HepG2 (cell line): ENCODE measurements at regions of chr4 and their contacts with region 1.

Region 1: DNA sequence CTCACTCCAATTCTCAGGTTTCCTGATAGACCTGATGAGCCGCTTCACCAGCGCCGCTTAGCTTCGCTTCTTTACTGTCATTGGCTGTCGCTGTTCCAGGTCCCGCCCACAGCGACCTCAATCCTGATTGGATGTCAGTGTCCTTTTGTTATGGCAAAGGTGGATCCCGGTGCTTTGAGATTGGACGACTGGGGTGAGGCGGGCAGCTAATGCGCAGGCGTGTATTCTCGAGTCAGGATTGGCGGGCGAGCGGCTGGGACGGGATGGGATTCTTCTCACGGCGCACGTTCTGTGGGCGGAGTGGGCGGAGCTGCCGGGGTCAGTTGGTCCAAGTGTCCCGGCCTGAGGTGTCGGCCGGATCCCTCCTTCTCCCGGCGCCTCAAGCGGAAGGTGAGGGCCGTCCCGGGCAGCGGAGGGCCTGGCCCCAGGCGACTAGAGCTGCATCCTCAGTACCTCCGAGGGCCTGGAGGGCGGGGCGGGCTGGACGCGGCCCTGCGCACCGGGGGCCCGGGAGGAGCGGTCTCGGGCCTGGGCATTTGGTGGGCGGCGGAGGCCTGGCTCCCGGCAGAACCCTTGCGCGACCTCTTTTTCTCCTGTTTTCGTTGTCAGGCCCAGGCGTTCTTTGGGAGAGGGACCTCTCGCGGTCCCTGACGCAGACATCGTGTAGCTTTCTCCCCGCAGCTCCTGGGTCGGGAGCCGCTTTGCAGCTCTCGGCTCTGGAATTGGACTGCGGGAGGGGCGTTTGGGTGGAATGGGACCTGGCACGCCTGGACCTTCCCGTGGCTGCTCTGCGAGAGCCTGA is at the start of gene SCOC:
- DNase-seq: peak; percentile 99
- ATAC-seq: peak; percentile 96
- H3K4me3 ChIP-seq: peak within 1 kb of the TSS; percentile 78 to 86 (median 85)
- H3K27ac ChIP-seq: peak within 1 kb of the TSS; percentile 85
- H3K4me1 ChIP-seq: peaks cover 45% of the 10 kb centered on the region
- H3K27me3 ChIP-seq: no peaks in the 10 kb centered on the region
- CTCF ChIP-seq: no peak
- EP300 ChIP-seq: no peak
- POLR2A ChIP-seq: peak in 1 of 2 experiments; percentile 82; a peak in 3 of 4 replicates
- RAD21 ChIP-seq: no peak
- total RNA-seq, gene SCOC: 65.2 and 109 TPM in 2 replicates

Region 2: GRCh38 chr4:139740531-139741041 is 632.9 kb before region 1 on chr4:
- CTCF ChIA-PET with region 1: no interaction called
- POLR2A ChIA-PET with region 1: no interaction called
- in situ Hi-C with region 1: no loop called
- intact Hi-C with region 1: no loop called
- DNase-seq: peak; percentile 83
- ATAC-seq: peak; percentile 48
- H3K4me3 ChIP-seq: no peak overlapping the region
- H3K27ac ChIP-seq: peak overlapping the region; percentile 73
- H3K4me1 ChIP-seq: peaks cover 42% of the 10 kb centered on the region
- H3K27me3 ChIP-seq: no peaks in the 10 kb centered on the region
- CTCF ChIP-seq: peak; percentile 60
- EP300 ChIP-seq: no peak; a peak in 1 of 4 replicates
- POLR2A ChIP-seq: no peak
- RAD21 ChIP-seq: no peak

Region 3: GRCh38 chr4:140353786-140354185 is 19.7 kb before region 1 on chr4:
- CTCF ChIA-PET with region 1: no interaction called
- POLR2A ChIA-PET with region 1: no interaction called
- in situ Hi-C with region 1: no loop called
- intact Hi-C with region 1: no loop called
- DNase-seq: no peak
- ATAC-seq: no peak
- H3K4me3 ChIP-seq: no peak overlapping the region
- H3K27ac ChIP-seq: no peak overlapping the region
- H3K4me1 ChIP-seq: peaks cover 8% of the 10 kb centered on the region
- H3K27me3 ChIP-seq: peaks cover 0 to 6% of the 10 kb centered on the region in 2 experiments; a peak in 2 of 5 replicates
- CTCF ChIP-seq: no peak
- EP300 ChIP-seq: no peak
- POLR2A ChIP-seq: no peak
- RAD21 ChIP-seq: no peak

Region 4: DNA sequence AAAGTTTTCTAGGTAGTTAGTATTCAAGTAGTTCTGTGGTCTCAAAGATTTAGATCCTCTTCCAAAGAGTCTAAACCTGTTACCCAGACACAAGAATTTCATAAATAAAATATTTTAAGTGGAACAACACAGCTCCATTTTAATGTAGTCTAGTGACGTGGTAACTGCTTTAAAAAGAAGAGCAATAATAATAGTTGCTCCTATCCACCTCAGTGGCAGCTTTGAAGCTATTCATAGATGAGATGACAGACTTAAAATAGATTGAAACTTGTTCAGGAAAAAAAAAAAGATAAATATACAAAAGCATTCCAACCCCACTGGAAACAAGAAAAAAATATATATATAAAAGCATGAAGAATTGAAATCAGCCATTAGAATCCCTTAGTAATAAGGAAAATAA is 14.5 kb after region 1 on chr4:
- CTCF ChIA-PET with region 1: no interaction called
- POLR2A ChIA-PET with region 1: interaction called, 17 read pairs
- in situ Hi-C with region 1: no loop called
- intact Hi-C with region 1: loop called (anchors 2 kb)
- DNase-seq: no peak
- ATAC-seq: no peak
- H3K4me3 ChIP-seq: no peak overlapping the region
- H3K27ac ChIP-seq: no peak overlapping the region
- H3K4me1 ChIP-seq: peaks cover 14% of the 10 kb centered on the region
- H3K27me3 ChIP-seq: no peaks in the 10 kb centered on the region
- CTCF ChIP-seq: no peak
- EP300 ChIP-seq: no peak
- POLR2A ChIP-seq: no peak
- RAD21 ChIP-seq: no peak

Region 5: GRCh38 chr4:140427106-140427961 is 53.8 kb after region 1 on chr4 and contains the start of gene CLGN:
- CTCF ChIA-PET with region 1: no interaction called
- POLR2A ChIA-PET with region 1: interaction called, 45 read pairs
- in situ Hi-C with region 1: no loop called
- intact Hi-C with region 1: loop called (anchors 2 kb)
- DNase-seq: peak; percentile 77
- ATAC-seq: peak; percentile 94
- H3K4me3 ChIP-seq: peak within 1 kb of the TSS; percentile 82 to 93 (median 92)
- H3K27ac ChIP-seq: peak within 1 kb of the TSS; percentile 75
- H3K4me1 ChIP-seq: peaks cover 24% of the 10 kb centered on the region
- H3K27me3 ChIP-seq: no peaks in the 10 kb centered on the region; a peak in 1 of 5 replicates
- CTCF ChIP-seq: peak; percentile 86
- EP300 ChIP-seq: no peak; a peak in 1 of 4 replicates
- POLR2A ChIP-seq: peak; percentile 66 to 80
- RAD21 ChIP-seq: peak; percentile 72
- total RNA-seq, gene CLGN: 10.0 and 17.0 TPM in 2 replicates

Region 6: GRCh38 chr4:140876615-140877364 is 503.3 kb after region 1 on chr4:
- CTCF ChIA-PET with region 1: no interaction called
- POLR2A ChIA-PET with region 1: no interaction called
- in situ Hi-C with region 1: no loop called
- intact Hi-C with region 1: no loop called
- DNase-seq: no peak
- ATAC-seq: no peak
- H3K4me3 ChIP-seq: no peak overlapping the region
- H3K27ac ChIP-seq: no peak overlapping the region
- H3K4me1 ChIP-seq: no peaks in the 10 kb centered on the region
- H3K27me3 ChIP-seq: no peaks in the 10 kb centered on the region
- CTCF ChIP-seq: no peak
- EP300 ChIP-seq: no peak
- POLR2A ChIP-seq: no peak
- RAD21 ChIP-seq: no peak